ENCODE measurements at regions of chr10 and their contacts with region 1.

Region 1: GRCh38 chr10:67666416-67667034 is 29.5 kb downstream of the CTNNA3 start:
- DNase-seq: no peak
- H3K4me3 ChIP-seq: no peak overlapping the region
- H3K27ac ChIP-seq: no peak overlapping the region
- H3K4me1 ChIP-seq: no peaks in the 10 kb centered on the region
- H3K27me3 ChIP-seq: no peaks in the 10 kb centered on the region
- CTCF ChIP-seq: peak; percentile 74

Region 2: GRCh38 chr10:68052463-68052862 is 385.9 kb after region 1 on chr10:
- CTCF ChIA-PET with region 1: no interaction called
- POLR2A ChIA-PET with region 1: interaction called, 16 read pairs
- intact Hi-C with region 1: no loop called
- DNase-seq: peak in 1 of 2 experiments; percentile 76
- H3K4me3 ChIP-seq: no peak overlapping the region
- H3K27ac ChIP-seq: peak overlapping the region; percentile 38
- H3K4me1 ChIP-seq: peaks cover 25% of the 10 kb centered on the region
- H3K27me3 ChIP-seq: no peaks in the 10 kb centered on the region
- CTCF ChIP-seq: no peak

Region 3: GRCh38 chr10:68973975-68974374 is 1307.5 kb after region 1 on chr10:
- CTCF ChIA-PET with region 1: no interaction called
- POLR2A ChIA-PET with region 1: no interaction called
- intact Hi-C with region 1: no loop called
- DNase-seq: no peak
- H3K4me3 ChIP-seq: no peak overlapping the region
- H3K27ac ChIP-seq: no peak overlapping the region
- H3K4me1 ChIP-seq: no peaks in the 10 kb centered on the region
- H3K27me3 ChIP-seq: no peaks in the 10 kb centered on the region
- CTCF ChIP-seq: no peak

Measured in PC-9 (cell line).